ENCODE measurements at regions of chr7 and their contacts with region 1.

Region 1: DNA sequence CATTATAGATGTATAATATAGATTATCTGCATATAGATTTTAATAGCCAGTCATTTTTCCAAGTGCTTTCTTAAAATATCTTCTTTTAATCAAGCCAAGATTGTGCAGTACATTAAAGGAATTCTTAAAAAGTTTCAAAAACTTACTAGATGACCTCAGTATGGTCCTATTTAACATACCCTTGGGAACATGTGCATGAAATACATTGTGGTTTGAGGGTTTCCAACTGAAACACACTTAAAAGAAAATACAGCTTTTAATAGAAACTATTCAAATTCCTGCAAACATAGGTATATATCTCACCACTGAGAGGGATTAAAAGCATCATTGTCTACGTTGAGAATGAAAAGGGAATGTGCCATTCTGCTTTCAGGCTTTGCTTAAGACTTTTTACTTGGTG is 364.9 kb downstream of the SUGCT start:
- DNase-seq: no peak
- ATAC-seq: no peak
- H3K4me3 ChIP-seq: no peak overlapping the region
- H3K4me3 Mint-ChIP-seq: no peak overlapping the region
- H3K27ac ChIP-seq: no peak overlapping the region
- H3K27ac Mint-ChIP-seq: no peak overlapping the region
- H3K4me1 ChIP-seq: no peaks in the 10 kb centered on the region
- H3K4me1 Mint-ChIP-seq: no peaks in the 10 kb centered on the region
- H3K27me3 ChIP-seq: no peaks in the 10 kb centered on the region
- H3K27me3 Mint-ChIP-seq: no peaks in the 10 kb centered on the region

Region 2: DNA sequence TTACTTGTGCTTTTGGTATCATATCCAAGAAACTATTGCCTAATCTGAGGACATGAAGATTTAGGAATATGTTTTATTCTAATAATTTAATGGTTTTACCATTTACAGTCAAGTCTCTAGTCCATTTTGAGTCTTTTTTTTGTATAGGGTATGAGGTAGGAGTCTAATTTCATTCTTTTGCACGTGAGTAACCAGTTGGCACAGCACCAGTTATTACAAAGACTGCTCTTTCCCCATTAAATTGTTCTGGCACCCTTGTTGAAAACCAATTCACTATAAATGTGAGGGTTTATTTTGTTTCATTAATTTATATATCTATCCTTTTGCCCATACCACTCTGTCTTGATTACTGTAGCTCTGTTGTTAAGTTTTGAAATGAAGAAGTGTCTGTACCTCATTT is 16.7 kb after region 1 on chr7:
- CTCF ChIA-PET with region 1: interaction called in 1 of 2 experiments, 10 read pairs
- POLR2A ChIA-PET with region 1: no interaction called
- DNase-seq: no peak
- ATAC-seq: no peak
- H3K4me3 ChIP-seq: no peak overlapping the region
- H3K4me3 Mint-ChIP-seq: no peak overlapping the region
- H3K27ac ChIP-seq: no peak overlapping the region
- H3K27ac Mint-ChIP-seq: no peak overlapping the region
- H3K4me1 ChIP-seq: no peaks in the 10 kb centered on the region
- H3K4me1 Mint-ChIP-seq: no peaks in the 10 kb centered on the region
- H3K27me3 ChIP-seq: no peaks in the 10 kb centered on the region
- H3K27me3 Mint-ChIP-seq: no peaks in the 10 kb centered on the region